ENCODE measurements at regions of chr12 and their contacts with region 1.

Region 1: DNA sequence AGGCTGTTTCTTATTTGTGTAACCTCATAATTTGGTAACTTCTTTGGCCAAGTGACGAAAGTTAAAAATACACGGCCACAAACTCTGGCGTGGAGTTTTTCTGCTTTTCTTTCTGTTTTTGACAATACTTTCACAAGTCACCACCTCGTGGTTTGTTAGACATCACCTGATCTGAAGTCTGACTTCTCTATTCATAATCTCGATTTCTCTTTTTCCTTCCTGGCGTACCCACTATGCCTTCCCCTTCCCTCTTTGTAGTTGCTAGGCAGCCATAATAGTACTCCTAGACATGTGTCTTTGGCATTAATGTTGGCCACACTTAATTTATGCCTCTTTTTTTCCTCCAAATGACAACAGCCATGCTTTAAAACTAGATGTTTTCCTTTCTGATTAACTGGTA is 97.6 kb downstream of the POLR3B start:
- DNase-seq: no peak

Region 2: GRCh38 chr12:105480162-105480561 is 974.9 kb before region 1 on chr12:
- intact Hi-C with region 1: loop called in 1 of 2 experiments (anchors 5 kb)
- DNase-seq: no peak

Measured in posterior vena cava (tissue), 2 donors.